Heart right ventricle (tissue), 16 donors: ENCODE measurements at regions of chr17 and their contacts with region 1.

Region 1: GRCh38 chr17:73192894-73193701 is at the start of gene COG1:
- DNase-seq: peak; percentile 91 to 92
- ATAC-seq: peak; percentile 88 to 93 (median 90)
- H3K4me3 ChIP-seq: peak within 1 kb of the TSS; percentile 67 to 98 (median 92)
- H3K27ac ChIP-seq: peak within 1 kb of the TSS; percentile 58 to 96 (median 90)
- H3K4me1 ChIP-seq: peaks cover 3 to 25% (median 15%) of the 10 kb centered on the region in 9 donors
- H3K27me3 ChIP-seq: no peaks in the 10 kb centered on the region
- CTCF ChIP-seq: no peak
- total RNA-seq, gene COG1: 44.4 to 70.6 (median 58.0) TPM

Region 2: GRCh38 chr17:72890711-72891110 is 302.4 kb before region 1 on chr17:
- intact Hi-C with region 1: no loop called
- DNase-seq: no peak
- ATAC-seq: no peak
- H3K4me3 ChIP-seq: no peak overlapping the region
- H3K27ac ChIP-seq: no peak overlapping the region
- H3K4me1 ChIP-seq: no peaks in the 10 kb centered on the region
- H3K27me3 ChIP-seq: no peaks in the 10 kb centered on the region
- CTCF ChIP-seq: no peak

Region 3: DNA sequence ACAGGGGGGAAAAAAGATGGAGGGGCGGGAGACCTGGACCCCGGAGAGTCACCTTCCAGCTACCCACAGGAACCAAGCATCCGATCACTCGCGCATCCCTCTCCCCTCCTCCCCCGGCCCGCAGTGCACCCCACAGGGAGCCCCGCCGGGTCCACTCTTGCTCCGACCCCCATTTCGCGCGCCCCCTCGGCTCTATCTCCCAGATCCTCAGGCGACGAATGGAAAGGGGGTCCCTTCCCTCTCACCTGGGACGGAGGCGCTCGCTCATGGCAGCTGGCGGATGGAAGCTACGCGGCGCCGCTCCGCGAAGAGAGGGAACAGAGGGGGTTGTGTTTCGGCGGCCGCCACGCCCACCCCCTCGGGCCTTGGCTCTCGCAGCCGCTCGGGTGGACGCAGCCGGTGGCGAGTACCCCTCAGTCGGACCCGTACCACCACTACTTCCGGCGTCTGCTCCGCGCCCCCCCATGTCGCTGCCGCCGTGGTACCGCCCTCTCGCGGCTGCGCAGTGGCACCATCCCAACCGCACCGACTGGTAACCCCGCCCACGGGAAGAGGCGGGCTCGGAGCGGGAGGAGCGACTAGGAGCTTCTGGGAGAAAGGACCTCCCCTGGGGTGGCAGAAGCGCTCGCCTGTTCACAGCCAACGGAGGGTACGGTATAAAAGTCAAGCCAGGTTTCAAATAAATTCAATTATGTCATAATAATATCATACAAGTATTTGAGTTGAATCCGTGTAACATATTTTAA is 38.9 kb after region 1 on chr17:
- intact Hi-C with region 1: loop called in 7 of 10 experiments (anchors 1 to 5 kb)
- DNase-seq: peak; percentile 97 to 98
- ATAC-seq: peak; percentile 96 to 98 (median 98)
- H3K4me3 ChIP-seq: peak overlapping the region; percentile 83 to 100 (median 94)
- H3K27ac ChIP-seq: peak overlapping the region; percentile 5 to 97 (median 90)
- H3K4me1 ChIP-seq: peaks cover 0 to 66% (median 48%) of the 10 kb centered on the region in 9 donors
- H3K27me3 ChIP-seq: no peaks in the 10 kb centered on the region
- CTCF ChIP-seq: peak in 8 of 9 donors; percentile 34 to 69 (median 55)

Region 4: DNA sequence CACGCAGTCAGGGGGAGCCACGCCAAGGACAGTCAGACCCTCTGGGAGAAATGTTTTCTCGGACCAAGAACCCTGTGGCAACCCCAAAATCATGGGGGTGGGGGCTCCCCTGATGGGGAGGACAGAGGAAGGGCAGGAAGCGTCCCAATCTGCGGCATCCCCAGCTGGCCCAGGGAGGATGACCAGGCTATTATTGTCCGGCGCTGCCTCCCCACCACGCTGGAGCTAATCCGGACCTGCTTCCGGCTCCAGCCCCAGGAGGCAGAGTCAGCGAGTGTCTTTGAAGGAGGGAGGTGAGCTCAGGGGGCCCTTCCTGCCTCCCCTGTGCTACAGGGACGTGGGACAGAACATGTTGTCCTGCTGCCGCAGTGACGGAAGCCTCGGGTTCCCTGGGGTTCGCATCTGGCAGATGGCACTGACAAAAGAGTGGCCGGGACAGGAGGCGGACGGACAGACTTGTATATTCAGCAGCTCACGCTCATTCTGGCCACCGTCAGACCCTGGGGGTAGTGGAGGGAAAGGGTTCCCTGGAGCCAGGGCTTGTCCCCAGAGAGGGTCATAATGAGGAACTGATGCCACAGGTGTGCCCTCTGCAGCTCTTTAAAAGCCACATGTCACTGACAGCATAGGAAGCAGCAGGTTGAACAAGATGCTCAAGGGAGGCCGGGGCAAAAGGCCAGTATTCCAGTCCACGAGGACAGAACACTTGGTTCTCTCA is 173.0 kb after region 1 on chr17:
- intact Hi-C with region 1: loop called in 2 of 10 experiments (anchors 5 kb)
- DNase-seq: peak; percentile 65 to 66
- ATAC-seq: peak; percentile 40 to 88 (median 70)
- H3K4me3 ChIP-seq: peak overlapping the region in 6 of 10 donors; percentile 4 to 24 (median 9)
- H3K27ac ChIP-seq: peak overlapping the region; percentile 65 to 82 (median 74)
- H3K4me1 ChIP-seq: peaks cover 10 to 32% (median 27%) of the 10 kb centered on the region in 9 donors
- H3K27me3 ChIP-seq: no peaks in the 10 kb centered on the region
- CTCF ChIP-seq: no peak